Right lobe of liver (tissue), 6 donors: ENCODE measurements at regions of chr20 and their contacts with region 1.

Region 1: GRCh38 chr20:45318948-45319347 is 10.8 kb upstream of the MATN4 start:
- DNase-seq: no peak
- ATAC-seq: no peak
- H3K4me3 ChIP-seq: no peak overlapping the region
- H3K27ac ChIP-seq: no peak overlapping the region
- H3K4me1 ChIP-seq: no peaks in the 10 kb centered on the region
- H3K27me3 ChIP-seq: no peaks in the 10 kb centered on the region
- CTCF ChIP-seq: no peak
- POLR2A ChIP-seq: no peak

Region 2: DNA sequence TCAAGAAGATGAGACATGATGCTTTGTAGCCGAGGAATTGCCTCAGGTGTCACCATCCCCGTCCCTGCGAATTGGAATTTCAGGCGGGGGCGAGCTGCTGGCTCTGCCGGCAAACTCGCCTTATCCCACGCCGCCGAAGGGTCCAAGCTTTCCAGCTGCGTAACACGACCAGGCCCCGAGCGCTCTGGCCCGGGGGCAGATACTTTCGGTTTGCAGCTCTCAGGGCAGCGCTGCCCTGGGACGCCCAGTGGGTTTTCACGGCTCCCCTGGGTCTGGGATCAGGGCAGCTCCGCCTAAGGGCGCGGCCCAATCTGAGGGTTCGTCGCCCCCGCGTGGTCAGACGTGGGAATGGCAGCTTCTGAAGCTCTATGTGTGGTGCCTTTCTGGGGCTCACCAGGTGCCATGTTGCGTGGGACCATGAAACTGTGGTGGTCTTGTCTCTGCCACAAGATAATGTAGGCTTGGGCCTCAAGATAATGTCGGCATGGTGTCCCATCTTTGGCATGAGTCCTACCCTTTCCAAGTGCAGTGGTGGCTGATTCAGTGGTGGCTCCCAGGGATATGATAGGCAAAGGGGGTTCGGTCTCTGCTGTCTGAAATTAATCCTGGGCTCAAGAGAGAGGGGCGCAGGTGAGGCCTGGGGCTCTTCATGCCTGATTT is 117.9 kb after region 1 on chr20:
- intact Hi-C with region 1: loop called (anchors 5 kb)
- DNase-seq: peak; percentile 90 to 91 (median 90)
- ATAC-seq: peak; percentile 100
- H3K4me3 ChIP-seq: peak overlapping the region; percentile 50 to 62 (median 57)
- H3K27ac ChIP-seq: peak overlapping the region; percentile 22 to 66 (median 52)
- H3K4me1 ChIP-seq: no peaks in the 10 kb centered on the region
- H3K27me3 ChIP-seq: no peaks in the 10 kb centered on the region
- CTCF ChIP-seq: peak; percentile 91 to 97 (median 96)
- POLR2A ChIP-seq: no peak

Region 3: DNA sequence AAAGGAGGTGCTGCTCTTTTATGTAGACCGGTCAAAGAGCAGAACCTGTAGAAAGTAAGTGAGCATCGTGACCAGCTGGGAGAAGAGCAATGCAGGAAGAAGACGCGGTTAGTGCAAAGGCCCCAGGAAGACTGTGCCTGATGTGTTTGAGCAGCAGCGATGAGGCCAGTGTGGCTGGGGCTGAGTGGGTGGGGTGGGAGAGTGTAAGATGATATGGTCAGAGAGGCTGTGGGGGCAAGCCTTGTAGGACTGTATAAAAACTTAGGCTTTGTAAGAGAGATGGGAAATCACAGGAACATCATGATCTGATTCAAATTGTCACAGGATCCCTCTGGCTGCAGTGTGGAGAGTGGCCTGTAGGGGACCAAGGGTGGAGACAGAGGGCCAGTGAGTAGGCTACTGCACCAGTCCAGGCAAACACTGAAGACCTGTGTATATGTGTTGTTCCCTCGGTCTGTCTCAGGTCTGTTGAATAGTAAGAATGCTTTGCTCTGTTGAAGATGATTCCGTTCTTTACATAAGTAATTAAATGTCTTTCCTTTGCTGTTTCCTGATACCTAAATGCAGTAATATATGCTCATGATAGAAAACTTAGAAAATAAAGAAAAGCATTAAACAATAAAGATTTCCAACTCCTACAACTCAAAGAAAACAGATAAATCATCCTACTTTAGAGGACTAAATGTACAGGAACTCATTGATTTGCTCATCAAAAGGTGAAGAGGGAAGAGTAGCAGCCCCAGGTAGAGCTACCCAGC is 127.0 kb after region 1 on chr20:
- intact Hi-C with region 1: loop called in 1 of 2 experiments (anchors 5 kb)
- DNase-seq: no peak
- ATAC-seq: peak; percentile 58 to 79 (median 78)
- H3K4me3 ChIP-seq: no peak overlapping the region
- H3K27ac ChIP-seq: no peak overlapping the region
- H3K4me1 ChIP-seq: no peaks in the 10 kb centered on the region
- H3K27me3 ChIP-seq: no peaks in the 10 kb centered on the region
- CTCF ChIP-seq: peak; percentile 33 to 49 (median 46)
- POLR2A ChIP-seq: no peak